Head of caudate nucleus (tissue), 42 donors: ENCODE measurements at regions of chr10 and their contacts with region 1.

Region 1: GRCh38 chr10:511101-511848 is 178.2 kb downstream of the DIP2C start:
- DNase-seq: peak; percentile 91 to 98 (median 96)

Region 2: GRCh38 chr10:683448-684071 is 172.3 kb after region 1 on chr10:
- intact Hi-C with region 1: loop called (anchors 5 kb)
- DNase-seq: peak in 38 of 42 donors; percentile 54 to 92 (median 73)

Region 3: GRCh38 chr10:784403-785088 is 273.3 kb after region 1 on chr10:
- intact Hi-C with region 1: loop called (anchors 5 kb)
- DNase-seq: peak; percentile 54 to 94 (median 76)